ENCODE measurements at regions of chr13 and their contacts with region 1.

Region 1: DNA sequence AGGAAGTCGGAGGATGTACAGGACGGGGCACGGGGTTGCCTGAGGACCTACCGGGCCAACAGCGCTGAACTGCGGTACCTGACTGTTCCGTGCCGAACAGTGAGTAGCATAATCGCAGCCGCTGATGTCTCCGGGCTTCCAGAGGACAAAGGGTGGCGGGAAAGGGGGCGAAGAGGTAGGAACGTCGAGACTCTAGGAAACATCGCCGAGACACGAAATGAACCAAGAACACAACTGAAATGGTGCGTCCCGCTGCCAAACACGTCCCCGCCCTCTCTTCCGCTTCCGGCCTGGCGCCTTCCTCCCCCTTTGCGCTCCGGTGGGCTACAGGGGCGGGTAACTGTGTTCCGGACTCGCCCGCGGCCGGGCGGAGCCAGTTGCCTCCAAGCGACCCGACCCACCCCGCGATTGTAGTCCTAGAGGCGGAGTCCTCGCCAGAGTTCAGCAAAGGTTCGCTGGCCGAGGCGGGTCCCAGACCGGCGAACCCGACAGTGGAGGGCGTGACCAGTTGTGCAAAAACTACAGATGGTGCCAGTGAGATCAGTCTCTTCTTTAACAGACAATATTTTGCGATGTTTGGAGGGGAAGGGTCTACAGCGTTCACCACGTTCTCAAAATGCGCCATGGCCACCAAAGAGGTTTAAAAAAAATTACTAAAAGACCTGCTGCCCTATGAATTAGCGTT is at the start of gene MRPS31:
- DNase-seq: peak; percentile 92 to 98 (median 97)
- H3K4me3 ChIP-seq: peak within 1 kb of the TSS; percentile 66 to 90 (median 72)
- H3K27ac ChIP-seq: peak within 1 kb of the TSS; percentile 63 to 86 (median 80)
- H3K4me1 ChIP-seq: peaks cover 0 to 8% of the 10 kb centered on the region in 2 donors
- H3K27me3 ChIP-seq: no peaks in the 10 kb centered on the region
- CTCF ChIP-seq: peak in 3 of 6 experiments; percentile 9 to 29 (median 21)
- POLR2A ChIP-seq: peak in 1 of 2 donors; percentile 76
- total RNA-seq, gene MRPS31: 13.1 to 40.9 (median 21.2) TPM

Region 2: DNA sequence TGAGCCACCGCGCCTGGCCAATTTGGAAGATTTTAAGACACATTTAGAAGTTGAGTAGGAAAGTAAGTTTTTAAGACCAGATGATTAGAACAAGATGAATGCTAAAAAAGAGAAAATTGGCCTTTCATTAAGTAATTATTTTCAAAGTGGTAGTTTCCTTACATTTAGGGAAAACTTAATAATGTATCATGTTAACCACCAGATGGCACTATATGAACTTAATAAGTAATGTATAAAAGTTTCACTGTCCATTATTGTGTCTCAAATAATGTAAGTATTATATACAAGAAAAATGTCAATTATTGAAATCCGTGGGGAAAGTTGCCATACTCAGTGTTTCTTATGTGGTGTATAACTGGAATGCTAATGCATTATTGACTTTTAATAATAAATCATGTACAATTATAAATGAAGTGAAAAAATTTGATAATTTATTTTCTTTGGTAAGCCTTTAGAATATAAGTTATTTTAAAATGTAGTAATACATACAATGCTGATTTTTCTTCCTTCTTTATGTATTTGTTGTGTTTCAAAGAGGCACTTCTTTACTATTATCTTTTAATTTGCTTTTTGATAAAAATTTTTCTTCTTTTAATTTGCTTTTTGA is 1086.4 kb before region 1 on chr13:
- intact Hi-C with region 1: loop called in 1 of 2 experiments (anchors 10 kb)
- DNase-seq: no peak
- H3K4me3 ChIP-seq: no peak overlapping the region
- H3K27ac ChIP-seq: no peak overlapping the region
- H3K4me1 ChIP-seq: no peaks in the 10 kb centered on the region
- H3K27me3 ChIP-seq: no peaks in the 10 kb centered on the region
- CTCF ChIP-seq: peak in 5 of 6 experiments; percentile 33 to 58 (median 52)
- POLR2A ChIP-seq: no peak

Region 3: GRCh38 chr13:40172149-40172591 is 598.9 kb before region 1 on chr13:
- intact Hi-C with region 1: no loop called
- DNase-seq: no peak
- H3K4me3 ChIP-seq: no peak overlapping the region
- H3K27ac ChIP-seq: no peak overlapping the region
- H3K4me1 ChIP-seq: no peaks in the 10 kb centered on the region
- H3K27me3 ChIP-seq: no peaks in the 10 kb centered on the region
- CTCF ChIP-seq: no peak
- POLR2A ChIP-seq: no peak

Region 4: DNA sequence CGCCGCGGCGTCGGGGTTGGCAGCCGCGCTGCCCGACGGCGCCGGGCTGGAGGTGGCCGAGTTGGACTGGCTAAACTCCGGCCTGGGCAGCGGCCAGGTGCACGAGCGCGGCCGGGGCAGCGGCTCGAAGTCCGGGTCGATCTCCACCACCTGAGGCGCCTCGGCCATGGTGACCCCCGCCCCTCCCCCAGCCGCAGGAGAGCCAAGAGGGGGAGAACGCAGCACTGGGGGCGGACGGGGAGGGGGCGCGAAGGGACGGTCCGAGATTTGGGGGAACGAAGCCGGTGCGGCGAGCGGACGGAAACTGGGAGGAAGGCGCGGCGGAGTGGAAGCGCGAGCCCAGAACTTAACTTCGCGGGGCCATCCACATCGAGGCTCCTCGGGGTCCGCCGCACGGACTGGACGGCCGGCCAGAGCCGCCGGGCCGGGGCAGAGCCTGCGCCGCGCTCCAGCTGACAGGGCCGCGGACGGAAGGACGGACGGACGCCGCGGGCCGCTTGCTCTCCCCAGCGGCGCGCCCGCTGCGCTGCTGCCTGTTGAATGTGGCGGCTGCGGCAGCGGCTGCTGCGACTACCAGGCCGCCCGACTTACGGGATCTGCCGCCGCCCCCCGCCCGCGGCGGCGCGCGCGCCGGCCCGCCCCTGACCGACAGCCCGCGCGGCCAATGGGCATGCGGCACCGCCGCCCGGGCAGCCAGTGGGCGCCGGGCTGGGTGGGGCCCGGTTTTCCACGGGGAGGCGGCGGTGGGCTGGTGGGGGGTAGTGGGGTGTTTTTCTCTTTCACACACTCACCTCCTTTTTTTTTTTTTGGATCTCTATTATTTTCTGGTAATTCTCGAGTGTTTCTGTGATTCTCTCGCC is 104.8 kb before region 1 on chr13 and contains the start of gene FOXO1:
- intact Hi-C with region 1: no loop called
- DNase-seq: peak; percentile 86 to 94 (median 89)
- H3K4me3 ChIP-seq: peak within 1 kb of the TSS; percentile 75 to 94 (median 88)
- H3K27ac ChIP-seq: peak within 1 kb of the TSS; percentile 83 to 98 (median 97)
- H3K4me1 ChIP-seq: peaks cover 22 to 34% of the 10 kb centered on the region in 2 donors
- H3K27me3 ChIP-seq: no peaks in the 10 kb centered on the region
- CTCF ChIP-seq: peak in 1 of 6 experiments; percentile 13
- POLR2A ChIP-seq: peak; percentile 94 to 98
- total RNA-seq, gene FOXO1: 17.2 to 35.4 (median 22.5) TPM

Region 5: DNA sequence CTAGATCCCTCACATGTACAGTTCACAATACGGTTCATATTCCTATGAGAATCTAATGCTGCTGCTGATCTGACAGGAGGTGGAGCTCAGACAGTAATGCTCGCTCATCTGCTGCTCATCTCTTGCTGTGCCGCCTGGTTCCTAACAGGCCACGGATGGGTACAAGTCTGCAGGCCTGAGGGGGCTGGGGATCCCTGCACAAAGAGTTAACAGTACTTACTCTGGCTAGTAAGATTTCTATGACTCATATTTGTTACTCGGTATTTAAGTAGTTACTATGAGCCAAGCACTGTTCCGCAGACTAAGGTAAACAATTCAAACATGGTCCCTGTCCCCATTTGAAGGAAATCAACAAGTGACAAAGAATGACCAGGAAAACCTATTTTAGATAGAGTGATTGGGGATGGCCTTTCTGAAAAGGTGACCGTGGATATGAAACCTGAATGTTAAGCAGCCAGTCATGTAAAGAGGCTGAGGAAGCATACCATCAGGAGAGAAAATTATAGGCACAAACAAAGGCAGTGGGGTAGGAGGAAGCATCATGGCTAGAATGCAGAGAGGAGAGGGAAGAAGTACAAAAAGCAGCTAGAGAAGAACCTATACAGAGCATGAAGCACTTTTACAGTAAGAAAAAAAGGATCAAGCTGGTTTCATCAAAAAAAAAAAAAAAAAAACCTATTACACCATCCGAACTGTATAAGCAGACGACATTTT is 269.7 kb after region 1 on chr13:
- intact Hi-C with region 1: no loop called
- DNase-seq: no peak
- H3K4me3 ChIP-seq: no peak overlapping the region
- H3K27ac ChIP-seq: no peak overlapping the region
- H3K4me1 ChIP-seq: peaks cover 4 to 10% of the 10 kb centered on the region in 2 donors
- H3K27me3 ChIP-seq: no peaks in the 10 kb centered on the region
- CTCF ChIP-seq: no peak
- POLR2A ChIP-seq: no peak